ENCODE measurements at regions of chr16 and their contacts with region 1.

Region 1: DNA sequence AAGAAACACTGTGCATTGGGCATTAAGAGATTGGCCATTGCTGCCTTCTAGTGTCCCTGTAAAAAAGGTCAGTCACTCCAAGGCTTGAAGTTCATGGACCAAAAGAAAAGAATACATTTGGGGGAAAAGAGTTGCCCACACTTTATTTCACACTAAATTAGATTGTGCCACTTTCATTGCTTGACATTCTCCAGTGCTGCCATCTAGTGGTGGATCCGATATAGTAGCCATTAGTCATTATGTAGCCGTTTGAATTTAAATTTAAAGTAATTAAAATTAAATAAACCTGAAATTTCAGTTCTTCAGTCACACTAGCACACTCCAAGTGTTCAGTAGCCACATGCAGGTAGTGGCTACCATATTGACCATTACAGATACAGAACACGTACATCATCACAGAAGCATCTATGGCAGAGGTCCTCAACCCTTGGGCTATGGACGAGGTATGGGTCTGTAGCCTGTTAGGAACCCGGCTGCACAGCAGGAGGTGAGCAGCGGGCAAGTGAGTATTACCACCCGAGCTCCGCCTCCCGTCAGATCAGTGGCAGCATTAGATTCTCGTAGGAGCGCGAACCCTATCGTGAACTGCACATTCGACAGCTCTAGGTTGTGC is 21.9 kb upstream of the CDH5 start:
- DNase-seq: no peak
- H3K4me3 Mint-ChIP-seq: no peak overlapping the region
- H3K27ac Mint-ChIP-seq: no peak overlapping the region
- H3K4me1 Mint-ChIP-seq: no peaks in the 10 kb centered on the region
- H3K27me3 Mint-ChIP-seq: peaks cover 13% of the 10 kb centered on the region

Region 2: GRCh38 chr16:66322174-66322573 is 22.5 kb before region 1 on chr16:
- CTCF ChIA-PET with region 1: no interaction called
- POLR2A ChIA-PET with region 1: no interaction called
- intact Hi-C with region 1: no loop called
- DNase-seq: no peak
- H3K4me3 Mint-ChIP-seq: no peak overlapping the region
- H3K27ac Mint-ChIP-seq: no peak overlapping the region
- H3K4me1 Mint-ChIP-seq: no peaks in the 10 kb centered on the region
- H3K27me3 Mint-ChIP-seq: peaks cover under 1% of the 10 kb centered on the region

Region 3: GRCh38 chr16:66364117-66364967 is 19.7 kb after region 1 on chr16:
- CTCF ChIA-PET with region 1: interaction called, 12 read pairs
- POLR2A ChIA-PET with region 1: no interaction called
- intact Hi-C with region 1: no loop called
- DNase-seq: no peak
- H3K4me3 Mint-ChIP-seq: no peak overlapping the region
- H3K27ac Mint-ChIP-seq: no peak overlapping the region
- H3K4me1 Mint-ChIP-seq: no peaks in the 10 kb centered on the region
- H3K27me3 Mint-ChIP-seq: peaks cover 50% of the 10 kb centered on the region